HEK293 (cell line): ENCODE measurements at regions of chr1 and their contacts with region 1.

Region 1: GRCh38 chr1:210262167-210262896 is 29.7 kb downstream of the SERTAD4 start:
- H3K4me3 ChIP-seq: no peak overlapping the region
- H3K27ac ChIP-seq: no peak overlapping the region; the same call in 1 of the 2 replicates
- H3K4me1 ChIP-seq: peaks cover 16% of the 10 kb centered on the region
- CTCF ChIP-seq: no peak

Region 2: GRCh38 chr1:210239349-210240111 is 22.8 kb before region 1 on chr1:
- CTCF ChIA-PET with region 1: interaction called, 22 read pairs
- POLR2A ChIA-PET with region 1: interaction called, 3 read pairs
- H3K4me3 ChIP-seq: no peak overlapping the region
- H3K27ac ChIP-seq: no peak overlapping the region
- H3K4me1 ChIP-seq: peaks cover 43% of the 10 kb centered on the region
- CTCF ChIP-seq: no peak; the same call in 1 of the 2 replicates

Region 3: DNA sequence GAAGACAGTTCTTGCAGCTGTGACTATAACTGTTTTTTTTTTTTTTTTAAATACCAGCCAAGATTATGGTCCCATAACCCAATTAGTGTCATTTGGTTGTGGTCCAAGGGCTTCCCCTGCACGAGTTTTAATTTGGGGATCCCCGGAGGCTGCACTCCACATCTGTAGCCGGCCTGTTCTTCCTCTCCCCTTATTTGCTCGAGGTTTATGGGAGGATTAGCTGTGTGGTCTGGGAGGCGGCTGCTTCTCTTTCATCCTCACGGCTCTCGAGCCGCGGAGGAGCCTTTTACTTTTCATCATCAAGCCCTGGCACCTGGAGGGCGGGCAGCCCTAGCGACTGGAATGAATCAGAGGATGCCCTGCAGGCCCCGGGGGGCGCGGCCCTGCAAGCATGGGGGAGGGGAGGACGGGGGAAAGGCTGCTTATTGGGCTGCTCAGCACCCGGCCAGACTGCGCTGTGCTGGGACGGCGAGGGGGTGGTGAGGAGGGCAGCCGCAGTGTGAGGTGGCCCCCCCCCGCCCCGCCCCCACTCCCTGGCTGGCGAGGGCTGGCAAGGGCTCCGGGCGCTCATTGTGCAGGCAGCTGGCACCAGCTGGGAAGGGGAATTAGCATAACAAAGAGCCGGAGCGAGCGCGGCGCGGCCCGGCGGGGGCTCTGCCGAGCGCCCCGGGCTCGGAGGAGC is 11.2 kb before region 1 on chr1:
- CTCF ChIA-PET with region 1: interaction called, 43 read pairs
- POLR2A ChIA-PET with region 1: interaction called, 7 read pairs
- H3K4me3 ChIP-seq: peak overlapping the region; percentile 23
- H3K27ac ChIP-seq: peak overlapping the region; percentile 83
- H3K4me1 ChIP-seq: peaks cover 18% of the 10 kb centered on the region
- CTCF ChIP-seq: no peak

Region 4: GRCh38 chr1:210272666-210273065 is 10.3 kb after region 1 on chr1:
- CTCF ChIA-PET with region 1: interaction called, 24 read pairs
- POLR2A ChIA-PET with region 1: no interaction called
- H3K4me3 ChIP-seq: no peak overlapping the region
- H3K27ac ChIP-seq: no peak overlapping the region
- H3K4me1 ChIP-seq: peaks cover 11% of the 10 kb centered on the region; the same call in 1 of the 2 replicates
- CTCF ChIP-seq: no peak

Region 5: DNA sequence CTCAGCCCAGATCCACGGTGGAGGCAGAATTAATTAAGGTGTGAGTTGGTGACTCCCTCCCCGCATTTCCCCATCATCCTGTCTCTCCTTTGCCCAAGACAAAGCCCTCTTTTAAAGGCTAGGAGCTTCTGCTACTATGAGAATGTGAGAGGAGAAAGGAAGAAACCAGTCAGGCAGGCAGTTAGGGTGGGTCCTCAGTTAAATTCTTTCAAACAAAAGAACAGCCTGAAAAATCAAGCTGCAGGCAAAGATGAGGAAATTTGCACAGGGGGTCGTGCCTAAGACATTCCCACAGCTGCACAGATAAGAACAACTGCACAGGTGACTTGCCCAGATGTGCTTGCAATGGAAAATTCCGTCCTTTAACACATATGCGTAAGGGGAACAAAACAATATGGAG is 17.9 kb after region 1 on chr1:
- CTCF ChIA-PET with region 1: interaction called, 24 read pairs
- POLR2A ChIA-PET with region 1: no interaction called
- H3K4me3 ChIP-seq: no peak overlapping the region
- H3K27ac ChIP-seq: no peak overlapping the region
- H3K4me1 ChIP-seq: no peaks in the 10 kb centered on the region
- CTCF ChIP-seq: no peak

Region 6: GRCh38 chr1:210292231-210292871 is 30.0 kb after region 1 on chr1:
- CTCF ChIA-PET with region 1: interaction called, 19 read pairs
- POLR2A ChIA-PET with region 1: interaction called, 8 read pairs
- H3K4me3 ChIP-seq: peak overlapping the region; percentile 33
- H3K27ac ChIP-seq: peak overlapping the region; percentile 78; the same call in 1 of the 2 replicates
- H3K4me1 ChIP-seq: peaks cover 20% of the 10 kb centered on the region
- CTCF ChIP-seq: peak; percentile 83

Region 7: DNA sequence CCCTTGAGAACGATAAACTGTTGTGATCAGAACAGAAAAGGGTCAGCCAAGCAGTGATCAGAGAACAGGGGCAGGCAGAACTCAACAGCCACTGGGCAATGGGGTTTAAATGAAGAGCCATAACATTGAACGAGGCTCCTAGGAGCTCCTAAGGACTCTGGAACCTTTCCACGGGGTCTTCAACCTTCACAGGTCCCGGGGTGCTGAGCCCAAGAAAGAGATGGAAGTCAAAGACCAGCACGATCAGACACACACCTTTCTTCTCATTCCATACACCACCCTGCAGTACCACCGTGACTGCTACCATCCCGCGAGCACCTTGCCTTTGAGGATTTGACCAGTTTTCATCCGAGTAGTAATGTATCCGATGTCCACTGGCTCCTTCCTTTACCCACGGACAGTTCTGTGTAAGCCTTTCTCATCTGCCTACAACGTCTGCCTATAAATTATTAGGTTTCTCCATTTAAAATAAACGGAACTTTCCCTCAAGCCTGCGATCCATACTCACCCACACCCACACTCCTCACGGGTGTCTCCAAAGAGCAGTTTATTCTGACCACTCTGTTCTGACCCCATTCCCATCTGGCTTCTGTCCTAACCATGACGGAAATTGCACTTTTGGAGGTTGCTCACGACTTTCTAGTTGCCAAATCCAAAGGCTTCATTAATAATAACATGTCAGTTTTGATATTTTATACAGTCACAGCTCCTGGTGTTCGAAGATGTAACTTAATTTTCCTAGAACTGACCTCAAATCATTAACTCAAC is 49.6 kb after region 1 on chr1:
- CTCF ChIA-PET with region 1: interaction called, 14 read pairs
- POLR2A ChIA-PET with region 1: interaction called, 3 read pairs
- H3K4me3 ChIP-seq: peak overlapping the region; percentile 42; the same call in 1 of the 2 replicates
- H3K27ac ChIP-seq: no peak overlapping the region; the same call in 1 of the 2 replicates
- H3K4me1 ChIP-seq: no peaks in the 10 kb centered on the region
- CTCF ChIP-seq: no peak

Region 8: DNA sequence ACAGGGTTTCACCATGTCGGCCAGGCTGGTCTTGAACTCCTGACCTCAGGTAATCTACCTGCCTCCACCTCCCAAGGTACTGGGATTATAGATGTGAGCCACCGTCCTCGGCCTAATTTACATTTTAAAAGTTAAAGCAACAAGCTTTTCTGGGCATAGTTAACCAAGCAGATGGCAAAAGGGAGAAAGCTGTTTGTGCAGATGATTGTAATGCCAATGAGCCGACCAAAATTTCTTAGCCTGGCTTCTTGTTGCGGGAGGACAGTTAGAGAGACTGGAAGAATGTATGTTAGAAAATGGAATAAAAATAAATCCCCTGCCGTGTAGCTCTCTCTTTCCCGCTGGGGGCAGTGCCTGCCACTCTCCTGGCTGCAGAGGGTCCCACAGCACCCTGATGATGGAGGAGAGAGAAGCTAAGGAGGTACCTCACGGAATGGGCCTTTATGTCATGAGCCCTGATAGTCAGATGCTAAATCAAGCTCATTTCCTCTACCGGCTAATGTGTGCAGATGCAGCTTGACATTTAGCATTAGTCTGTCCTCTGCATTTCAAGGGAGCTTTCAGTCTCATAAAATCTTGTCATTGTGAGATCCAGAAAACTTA is 153.6 kb after region 1 on chr1:
- CTCF ChIA-PET with region 1: no interaction called
- POLR2A ChIA-PET with region 1: no interaction called
- H3K4me3 ChIP-seq: no peak overlapping the region
- H3K27ac ChIP-seq: no peak overlapping the region
- H3K4me1 ChIP-seq: no peaks in the 10 kb centered on the region
- CTCF ChIP-seq: no peak